PC-9 (cell line): ENCODE measurements at regions of chr2 and their contacts with region 1.

Region 1: GRCh38 chr2:240739797-240740196 is 48.1 kb downstream of the AQP12A start:
- DNase-seq: peak in 1 of 2 experiments; percentile 68
- H3K4me3 ChIP-seq: no peak overlapping the region
- H3K27ac ChIP-seq: no peak overlapping the region
- H3K4me1 ChIP-seq: no peaks in the 10 kb centered on the region; the same call in 1 of the 2 replicates
- H3K27me3 ChIP-seq: peaks cover 29% of the 10 kb centered on the region
- CTCF ChIP-seq: no peak

Region 2: DNA sequence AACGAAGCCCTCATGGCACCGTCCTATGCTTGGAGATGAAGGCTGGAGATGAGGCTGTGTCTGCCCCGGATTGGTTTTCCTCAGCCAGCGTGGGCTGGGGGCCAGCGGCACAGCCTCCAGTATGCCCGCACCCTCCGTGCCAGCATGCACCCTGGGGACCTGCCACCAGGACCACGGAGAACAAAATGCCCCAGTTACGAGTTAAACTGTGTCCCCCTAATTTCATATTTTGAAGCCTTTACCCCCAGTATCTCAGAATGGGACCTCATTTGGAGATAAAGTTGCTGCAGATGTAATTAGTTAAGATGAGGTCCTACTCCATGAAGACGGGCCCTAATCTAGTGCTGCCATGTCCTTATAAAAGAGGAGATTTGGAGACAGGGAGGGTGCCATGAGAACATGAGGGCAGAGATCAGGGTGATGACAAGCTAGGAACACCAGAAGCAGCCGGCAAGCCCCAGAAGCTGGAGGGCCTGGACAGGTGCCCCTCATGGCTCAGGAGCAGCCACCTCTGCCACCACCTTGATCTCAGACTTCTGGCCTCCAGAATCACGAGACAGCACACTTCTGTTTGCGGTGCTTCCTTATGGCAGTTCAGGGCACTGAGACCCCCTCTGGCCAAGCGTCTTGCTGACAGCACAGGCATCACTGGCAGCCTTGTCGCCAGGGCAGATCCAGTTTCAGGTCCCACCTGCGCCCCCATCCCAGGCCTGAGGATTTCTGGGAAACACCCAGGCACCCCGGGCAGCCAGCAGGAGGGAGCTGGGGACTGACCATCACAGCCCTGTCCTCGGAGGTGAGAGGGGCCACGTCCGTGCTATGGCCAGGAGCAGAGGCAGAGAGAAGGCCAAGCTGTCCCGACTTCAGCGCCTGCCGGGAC is 50.8 kb after region 1 on chr2:
- CTCF ChIA-PET with region 1: interaction called, 11 read pairs
- POLR2A ChIA-PET with region 1: no interaction called
- intact Hi-C with region 1: no loop called
- DNase-seq: no peak
- H3K4me3 ChIP-seq: no peak overlapping the region
- H3K27ac ChIP-seq: no peak overlapping the region
- H3K4me1 ChIP-seq: no peaks in the 10 kb centered on the region
- H3K27me3 ChIP-seq: peaks cover 97% of the 10 kb centered on the region
- CTCF ChIP-seq: no peak